BJ (cell line): ENCODE measurements at regions of chr19 and their contacts with region 1.

Region 1: GRCh38 chr19:47348819-47349795 is at the start of gene DHX34:
- DNase-seq: peak; percentile 98
- H3K4me3 ChIP-seq: peak within 1 kb of the TSS; percentile 61
- H3K27me3 ChIP-seq: no peaks in the 10 kb centered on the region
- CTCF ChIP-seq: peak; percentile 100
- polyA plus RNA-seq, gene DHX34: 4.1 and 6.4 TPM in 2 replicates

Region 2: GRCh38 chr19:47315125-47315821 is 33.8 kb before region 1 on chr19:
- CTCF ChIA-PET with region 1: interaction called, 17 read pairs
- POLR2A ChIA-PET with region 1: no interaction called
- DNase-seq: peak; percentile 66
- H3K4me3 ChIP-seq: no peak overlapping the region
- H3K27me3 ChIP-seq: no peaks in the 10 kb centered on the region; the same call in 1 of the 2 replicates
- CTCF ChIP-seq: no peak

Region 3: GRCh38 chr19:47336853-47337279 is 12.2 kb before region 1 on chr19:
- CTCF ChIA-PET with region 1: interaction called, 32 read pairs
- POLR2A ChIA-PET with region 1: no interaction called
- DNase-seq: no peak
- H3K4me3 ChIP-seq: no peak overlapping the region
- H3K27me3 ChIP-seq: peaks cover under 1% of the 10 kb centered on the region
- CTCF ChIP-seq: no peak

Region 4: DNA sequence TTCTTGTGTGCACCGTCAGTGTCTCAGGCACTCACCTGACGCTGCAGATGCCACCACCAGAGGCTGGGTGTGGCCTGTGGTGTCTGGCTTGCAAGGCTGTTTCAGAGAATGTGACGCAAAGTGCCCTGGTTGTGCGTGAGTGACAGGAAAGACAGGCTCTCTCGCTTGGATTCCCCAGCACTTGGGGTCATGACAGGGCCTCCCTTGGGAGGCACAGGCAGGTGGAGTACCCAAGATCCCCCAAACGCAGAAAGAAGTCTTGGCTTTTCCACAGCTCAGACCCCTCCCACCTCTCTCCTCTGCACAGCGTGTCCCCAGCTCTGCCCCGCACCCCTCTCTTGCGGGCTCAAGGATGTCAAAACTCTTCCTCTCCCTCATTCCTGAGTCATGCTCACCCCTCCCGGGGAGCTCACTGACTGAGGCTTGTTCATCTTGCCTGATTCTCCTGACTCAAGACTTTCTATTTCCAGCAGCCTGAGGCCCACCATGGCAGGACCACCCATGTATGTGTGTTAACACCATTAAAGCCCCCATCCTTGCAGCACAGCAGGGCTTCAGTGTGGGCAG is 21.0 kb after region 1 on chr19:
- CTCF ChIA-PET with region 1: interaction called, 16 read pairs
- POLR2A ChIA-PET with region 1: no interaction called
- DNase-seq: no peak
- H3K4me3 ChIP-seq: no peak overlapping the region
- H3K27me3 ChIP-seq: no peaks in the 10 kb centered on the region
- CTCF ChIP-seq: no peak

Region 5: GRCh38 chr19:47391510-47392223 is 42.6 kb after region 1 on chr19:
- CTCF ChIA-PET with region 1: interaction called, 12 read pairs
- POLR2A ChIA-PET with region 1: interaction called, 3 read pairs
- DNase-seq: peak; percentile 4
- H3K4me3 ChIP-seq: no peak overlapping the region
- H3K27me3 ChIP-seq: peaks cover 2% of the 10 kb centered on the region; the same call in 1 of the 2 replicates
- CTCF ChIP-seq: peak; percentile 92

Region 6: GRCh38 chr19:47456721-47457478 is 107.8 kb after region 1 on chr19:
- CTCF ChIA-PET with region 1: no interaction called
- POLR2A ChIA-PET with region 1: no interaction called
- DNase-seq: no peak
- H3K4me3 ChIP-seq: no peak overlapping the region
- H3K27me3 ChIP-seq: peaks cover 37% of the 10 kb centered on the region
- CTCF ChIP-seq: no peak